Transverse colon (tissue), 4 donors: ENCODE measurements at regions of chr9 and their contacts with region 1.

Region 1: DNA sequence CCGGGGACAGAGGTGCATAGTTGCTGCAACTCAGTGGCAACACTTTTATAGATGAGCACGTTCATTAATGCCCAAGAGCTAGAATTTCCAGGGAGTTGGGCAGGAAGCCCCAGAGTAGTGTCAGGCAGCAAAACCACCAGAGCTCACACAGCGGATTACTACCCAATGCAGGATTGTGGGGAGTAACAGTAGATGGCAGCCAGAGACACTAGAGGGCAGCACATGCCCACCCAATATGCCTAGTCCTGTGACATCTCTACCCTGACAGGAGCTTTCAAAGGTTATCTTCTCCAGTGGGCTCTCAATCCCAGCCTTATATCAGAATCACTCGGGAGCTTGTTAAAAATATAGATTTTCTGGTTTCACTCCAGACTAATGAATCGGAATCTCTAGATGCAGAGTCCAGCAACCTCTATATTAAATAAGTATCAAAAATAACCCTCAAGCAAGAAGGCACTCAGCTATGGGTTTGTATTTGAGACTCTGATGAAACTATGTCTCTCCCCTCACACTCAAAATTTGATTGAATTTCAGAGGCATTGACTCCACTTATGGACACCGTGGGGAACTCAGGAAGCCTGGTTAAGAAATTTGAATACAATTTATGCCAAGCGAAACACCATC is 58.4 kb upstream of the PHF24 start:
- DNase-seq: peak; percentile 81
- H3K4me3 ChIP-seq: no peak overlapping the region
- H3K27ac ChIP-seq: no peak overlapping the region
- H3K4me1 ChIP-seq: no peaks in the 10 kb centered on the region
- H3K27me3 ChIP-seq: peaks cover 39% of the 10 kb centered on the region
- CTCF ChIP-seq: peak; percentile 75 to 83 (median 76)
- EP300 ChIP-seq: no peak
- POLR2A ChIP-seq: no peak

Region 2: GRCh38 chr9:34759432-34760134 is 140.1 kb before region 1 on chr9:
- in situ Hi-C with region 1: no loop called
- intact Hi-C with region 1: loop called (anchors 2 kb)
- DNase-seq: no peak
- H3K4me3 ChIP-seq: no peak overlapping the region
- H3K27ac ChIP-seq: no peak overlapping the region
- H3K4me1 ChIP-seq: no peaks in the 10 kb centered on the region
- H3K27me3 ChIP-seq: peaks cover 23% of the 10 kb centered on the region
- CTCF ChIP-seq: no peak
- EP300 ChIP-seq: no peak
- POLR2A ChIP-seq: no peak

Region 3: GRCh38 chr9:34974664-34975063 is 75.0 kb after region 1 on chr9:
- in situ Hi-C with region 1: loop called in 3 of 4 experiments (anchors 10 to 25 kb)
- intact Hi-C with region 1: no loop called
- DNase-seq: no peak
- H3K4me3 ChIP-seq: no peak overlapping the region
- H3K27ac ChIP-seq: no peak overlapping the region
- H3K4me1 ChIP-seq: no peaks in the 10 kb centered on the region
- H3K27me3 ChIP-seq: no peaks in the 10 kb centered on the region
- CTCF ChIP-seq: no peak
- EP300 ChIP-seq: no peak
- POLR2A ChIP-seq: no peak

Region 4: DNA sequence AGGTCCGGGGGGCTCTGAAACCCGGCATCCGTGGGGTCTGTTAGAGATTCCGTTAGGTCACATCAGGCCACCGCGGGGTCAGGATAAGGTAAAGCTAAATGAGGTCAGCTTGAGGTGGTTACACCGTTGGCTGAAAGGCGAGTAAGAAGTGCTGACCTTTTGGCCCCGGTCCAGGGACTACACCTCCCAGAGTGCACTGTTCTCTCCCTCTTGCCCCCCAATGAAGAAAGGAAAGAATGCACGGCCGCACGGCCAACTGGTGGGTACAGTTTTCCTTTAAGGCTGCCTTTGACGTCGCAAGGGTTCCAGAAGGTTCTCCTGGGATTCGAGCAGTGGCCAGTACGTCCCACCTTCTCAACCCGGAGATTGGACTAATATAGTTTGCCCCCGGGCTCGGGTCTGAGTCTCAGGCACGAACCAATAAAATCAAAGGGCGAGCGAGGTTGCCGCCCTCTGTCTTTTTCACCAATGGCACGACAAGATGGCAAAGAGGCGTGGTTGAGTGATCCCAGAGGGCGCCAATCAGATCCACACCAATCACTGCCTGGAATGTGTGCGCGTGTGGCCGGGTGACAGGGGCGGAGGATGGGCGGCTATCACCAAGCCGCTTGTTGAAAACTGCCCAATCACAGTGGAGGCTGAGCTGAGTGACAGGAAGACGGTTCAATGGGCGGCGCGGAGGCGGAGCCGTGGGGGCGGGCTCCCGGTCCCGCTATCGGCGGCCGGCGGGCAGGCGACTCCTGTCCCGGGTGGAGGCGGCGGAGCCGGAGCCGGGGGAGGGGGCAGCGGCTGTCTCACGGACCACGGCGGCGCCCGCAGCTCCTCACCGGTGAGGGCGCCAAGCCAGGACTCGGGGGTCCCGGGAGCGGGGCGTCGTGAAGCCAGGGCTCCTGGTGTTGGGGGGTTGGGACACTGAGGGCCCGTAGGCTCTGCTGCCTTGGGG is 89.6 kb after region 1 on chr9 and contains the start of gene DNAJB5:
- in situ Hi-C with region 1: loop called in 1 of 4 experiments (anchors 25 kb)
- intact Hi-C with region 1: loop called (anchors 10 kb)
- DNase-seq: peak; percentile 98
- H3K4me3 ChIP-seq: peak within 1 kb of the TSS; percentile 56 to 97 (median 90)
- H3K27ac ChIP-seq: peak within 1 kb of the TSS; percentile 90 to 96 (median 94)
- H3K4me1 ChIP-seq: peaks cover 22 to 45% (median 39%) of the 10 kb centered on the region in 4 donors
- H3K27me3 ChIP-seq: no peaks in the 10 kb centered on the region
- CTCF ChIP-seq: no peak
- EP300 ChIP-seq: no peak
- POLR2A ChIP-seq: peak; percentile 74
- total RNA-seq, gene DNAJB5: 4.1 to 22.5 (median 10.2) TPM

Region 5: GRCh38 chr9:35096035-35096849 is 196.6 kb after region 1 on chr9 and contains the start of gene PIGO:
- in situ Hi-C with region 1: no loop called
- intact Hi-C with region 1: loop called (anchors 10 kb)
- DNase-seq: peak; percentile 93
- H3K4me3 ChIP-seq: peak within 1 kb of the TSS; percentile 73 to 91 (median 80)
- H3K27ac ChIP-seq: peak within 1 kb of the TSS; percentile 96 to 97 (median 96)
- H3K4me1 ChIP-seq: peaks cover 6 to 14% (median 10%) of the 10 kb centered on the region in 4 donors
- H3K27me3 ChIP-seq: no peaks in the 10 kb centered on the region
- CTCF ChIP-seq: peak; percentile 72 to 94 (median 74)
- EP300 ChIP-seq: peak; percentile 12
- POLR2A ChIP-seq: peak; percentile 86
- total RNA-seq, gene PIGO: 19.1 to 50.1 (median 24.8) TPM

Region 6: DNA sequence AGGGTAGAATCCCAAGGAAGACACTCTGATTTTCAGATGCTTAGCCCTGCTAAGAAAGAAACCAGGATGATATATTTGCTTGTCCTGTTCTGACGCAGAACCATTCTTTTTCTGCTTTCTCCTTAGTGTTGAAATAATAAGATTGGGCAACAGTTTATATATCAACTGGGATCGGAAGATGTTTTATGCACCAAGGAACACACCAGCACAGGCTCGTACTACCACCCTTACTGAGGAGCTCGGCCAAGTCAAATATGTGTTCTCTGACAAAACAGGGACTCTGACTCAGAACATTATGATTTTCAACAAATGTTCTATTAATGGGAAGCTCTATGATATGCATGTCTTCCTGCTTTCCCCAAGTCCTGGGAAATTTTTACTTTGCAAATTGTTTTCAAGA is 571.2 kb after region 1 on chr9:
- in situ Hi-C with region 1: loop called in 2 of 4 experiments (anchors 10 kb)
- intact Hi-C with region 1: no loop called
- DNase-seq: no peak
- H3K4me3 ChIP-seq: no peak overlapping the region
- H3K27ac ChIP-seq: no peak overlapping the region
- H3K4me1 ChIP-seq: no peaks in the 10 kb centered on the region
- H3K27me3 ChIP-seq: peaks cover 1% of the 10 kb centered on the region
- CTCF ChIP-seq: no peak
- EP300 ChIP-seq: no peak
- POLR2A ChIP-seq: no peak